CD14-positive monocyte (primary cell): ENCODE measurements at regions of chr19 and their contacts with region 1.

Region 1: GRCh38 chr19:45643024-45643926 is 4.1 kb upstream of the EML2 start:
- DNase-seq: peak; percentile 82 to 86 (median 82)
- H3K4me3 ChIP-seq: peak overlapping the region in 1 of 3 experiments; percentile 28
- H3K4me3 Mint-ChIP-seq: peak overlapping the region; percentile 69 to 83
- H3K27ac ChIP-seq: peak overlapping the region; percentile 52 to 96
- H3K27ac Mint-ChIP-seq: peak overlapping the region; percentile 57 to 96 (median 92)
- H3K4me1 ChIP-seq: peaks cover 59 to 67% of the 10 kb centered on the region in 2 donors
- H3K4me1 Mint-ChIP-seq: peaks cover 46% of the 10 kb centered on the region
- H3K27me3 ChIP-seq: peaks cover 16 to 33% of the 10 kb centered on the region in 2 donors
- H3K27me3 Mint-ChIP-seq: peaks cover 39 to 46% (median 40%) of the 10 kb centered on the region in 3 donors
- CTCF ChIP-seq: peak; percentile 97

Region 2: GRCh38 chr19:45405435-45406225 is 237.6 kb before region 1 on chr19:
- intact Hi-C with region 1: loop called in 1 of 2 experiments (anchors 10 kb)
- DNase-seq: peak; percentile 59 to 72 (median 63)
- H3K4me3 ChIP-seq: peak overlapping the region; percentile 62 to 91 (median 73)
- H3K4me3 Mint-ChIP-seq: peak overlapping the region; percentile 81 to 95
- H3K27ac ChIP-seq: peak overlapping the region; percentile 71 to 93
- H3K27ac Mint-ChIP-seq: peak overlapping the region; percentile 88 to 100 (median 98)
- H3K4me1 ChIP-seq: peaks cover 57 to 69% of the 10 kb centered on the region in 2 donors
- H3K4me1 Mint-ChIP-seq: peaks cover 50% of the 10 kb centered on the region
- H3K27me3 ChIP-seq: peaks cover 28 to 39% of the 10 kb centered on the region in 2 donors
- H3K27me3 Mint-ChIP-seq: peaks cover 37 to 42% (median 41%) of the 10 kb centered on the region in 3 donors
- CTCF ChIP-seq: no peak

Region 3: DNA sequence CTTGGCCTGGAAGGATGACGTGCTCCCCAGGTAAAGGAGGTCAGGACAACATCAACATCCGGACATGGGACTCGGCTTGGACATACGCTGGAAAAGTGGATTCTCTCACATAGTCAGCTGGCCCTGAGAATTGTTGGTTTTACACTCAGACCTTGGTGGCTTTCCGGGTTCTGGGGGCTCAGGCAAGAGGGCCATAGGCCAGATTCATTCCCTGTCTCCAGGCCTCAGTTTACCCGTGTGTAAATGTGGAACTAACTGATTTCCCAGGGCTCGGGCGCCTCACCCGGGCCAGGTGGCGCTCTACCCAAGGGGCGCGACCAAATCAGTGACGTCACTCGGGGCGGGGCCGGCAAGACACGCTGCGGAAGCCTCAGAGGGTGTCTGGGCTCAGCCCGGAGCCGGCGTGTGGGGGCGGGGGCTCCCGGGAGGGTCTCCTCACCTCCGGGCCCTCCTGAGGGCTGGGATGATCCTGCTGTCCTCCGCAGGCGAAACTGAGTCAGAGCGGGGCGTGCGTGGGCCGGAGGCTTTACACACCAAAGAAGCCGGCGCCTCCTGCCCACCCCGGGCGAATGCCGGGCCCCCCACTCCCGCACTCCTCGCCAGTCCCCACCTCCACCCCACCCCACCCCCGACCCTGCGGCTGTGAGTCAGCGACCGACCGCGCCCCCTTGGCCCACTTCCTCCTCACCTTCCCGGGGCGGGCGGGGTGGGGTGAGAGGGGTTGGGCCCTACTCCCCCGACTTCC is 136.9 kb before region 1 on chr19:
- intact Hi-C with region 1: no loop called
- DNase-seq: peak; percentile 89 to 95 (median 89)
- H3K4me3 ChIP-seq: peak overlapping the region; percentile 80 to 100 (median 91)
- H3K4me3 Mint-ChIP-seq: peak overlapping the region; percentile 88 to 89
- H3K27ac ChIP-seq: peak overlapping the region; percentile 96 to 99
- H3K27ac Mint-ChIP-seq: peak overlapping the region; percentile 96 to 99 (median 97)
- H3K4me1 ChIP-seq: peaks cover 59 to 76% of the 10 kb centered on the region in 2 donors
- H3K4me1 Mint-ChIP-seq: peaks cover 61% of the 10 kb centered on the region
- H3K27me3 ChIP-seq: no peaks in the 10 kb centered on the region
- H3K27me3 Mint-ChIP-seq: peaks cover 0 to 4% (median 0%) of the 10 kb centered on the region in 3 donors
- CTCF ChIP-seq: peak; percentile 34

Region 4: DNA sequence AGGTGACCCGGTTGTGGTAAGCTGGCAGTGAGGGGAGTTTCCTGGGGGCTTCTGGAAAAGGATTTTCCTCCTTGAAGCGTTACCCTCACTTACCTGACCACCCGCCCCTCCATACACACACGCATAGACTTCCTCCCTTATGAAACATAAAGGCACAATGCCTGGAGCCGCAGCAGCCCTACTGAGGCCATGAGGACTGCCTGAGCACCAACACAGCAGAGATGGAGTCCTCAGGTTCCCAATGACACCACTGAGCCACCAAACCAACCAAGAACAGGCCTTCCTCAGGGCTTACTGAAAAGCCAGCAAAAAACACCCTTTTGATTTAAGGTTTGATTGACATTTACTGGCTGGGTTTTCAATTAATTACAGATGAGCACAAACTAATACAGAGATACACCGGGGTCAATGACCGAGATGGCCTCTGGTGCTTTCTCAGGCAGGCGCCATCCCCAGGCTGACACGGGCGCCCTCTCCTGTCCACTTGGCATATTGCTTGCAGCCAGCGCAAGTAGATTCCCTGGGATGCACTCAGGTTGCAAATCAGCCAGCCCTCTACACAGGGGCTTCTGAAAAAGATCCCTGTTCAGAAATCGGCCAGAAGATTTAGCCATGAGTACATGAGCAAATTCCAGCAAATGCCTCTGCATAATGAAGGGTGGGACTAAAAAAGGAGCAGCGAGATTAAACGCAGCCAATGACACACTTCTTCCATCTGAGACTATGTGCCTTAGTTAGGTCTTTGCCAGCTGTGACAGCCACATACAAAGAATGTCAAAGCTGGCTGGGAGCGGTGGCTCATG is 73.5 kb before region 1 on chr19:
- intact Hi-C with region 1: no loop called
- DNase-seq: peak; percentile 22 to 41 (median 26)
- H3K4me3 ChIP-seq: no peak overlapping the region
- H3K4me3 Mint-ChIP-seq: no peak overlapping the region
- H3K27ac ChIP-seq: no peak overlapping the region
- H3K27ac Mint-ChIP-seq: peak overlapping the region in 1 of 7 donors; percentile 82
- H3K4me1 ChIP-seq: no peaks in the 10 kb centered on the region
- H3K4me1 Mint-ChIP-seq: no peaks in the 10 kb centered on the region
- H3K27me3 ChIP-seq: no peaks in the 10 kb centered on the region
- H3K27me3 Mint-ChIP-seq: peaks cover 0 to 1% (median 0%) of the 10 kb centered on the region in 3 donors
- CTCF ChIP-seq: peak; percentile 72

Region 5: GRCh38 chr19:45584332-45585157 is 58.7 kb before region 1 on chr19 and contains the start of gene OPA3:
- intact Hi-C with region 1: loop called in 1 of 2 experiments (anchors 10 kb)
- DNase-seq: peak; percentile 99 to 100 (median 100)
- H3K4me3 ChIP-seq: peak within 1 kb of the TSS; percentile 87 to 92 (median 89)
- H3K4me3 Mint-ChIP-seq: peak within 1 kb of the TSS; percentile 93 to 94
- H3K27ac ChIP-seq: peak within 1 kb of the TSS; percentile 95 to 98
- H3K27ac Mint-ChIP-seq: peak within 1 kb of the TSS; percentile 97 to 99 (median 98)
- H3K4me1 ChIP-seq: peaks cover 12 to 16% of the 10 kb centered on the region in 2 donors
- H3K4me1 Mint-ChIP-seq: peaks cover 8% of the 10 kb centered on the region
- H3K27me3 ChIP-seq: no peaks in the 10 kb centered on the region
- H3K27me3 Mint-ChIP-seq: peaks cover 2 to 12% (median 10%) of the 10 kb centered on the region in 3 donors
- CTCF ChIP-seq: no peak
- polyA plus RNA-seq, gene OPA3: 4.4 to 6.9 (median 5.6) TPM

Region 6: DNA sequence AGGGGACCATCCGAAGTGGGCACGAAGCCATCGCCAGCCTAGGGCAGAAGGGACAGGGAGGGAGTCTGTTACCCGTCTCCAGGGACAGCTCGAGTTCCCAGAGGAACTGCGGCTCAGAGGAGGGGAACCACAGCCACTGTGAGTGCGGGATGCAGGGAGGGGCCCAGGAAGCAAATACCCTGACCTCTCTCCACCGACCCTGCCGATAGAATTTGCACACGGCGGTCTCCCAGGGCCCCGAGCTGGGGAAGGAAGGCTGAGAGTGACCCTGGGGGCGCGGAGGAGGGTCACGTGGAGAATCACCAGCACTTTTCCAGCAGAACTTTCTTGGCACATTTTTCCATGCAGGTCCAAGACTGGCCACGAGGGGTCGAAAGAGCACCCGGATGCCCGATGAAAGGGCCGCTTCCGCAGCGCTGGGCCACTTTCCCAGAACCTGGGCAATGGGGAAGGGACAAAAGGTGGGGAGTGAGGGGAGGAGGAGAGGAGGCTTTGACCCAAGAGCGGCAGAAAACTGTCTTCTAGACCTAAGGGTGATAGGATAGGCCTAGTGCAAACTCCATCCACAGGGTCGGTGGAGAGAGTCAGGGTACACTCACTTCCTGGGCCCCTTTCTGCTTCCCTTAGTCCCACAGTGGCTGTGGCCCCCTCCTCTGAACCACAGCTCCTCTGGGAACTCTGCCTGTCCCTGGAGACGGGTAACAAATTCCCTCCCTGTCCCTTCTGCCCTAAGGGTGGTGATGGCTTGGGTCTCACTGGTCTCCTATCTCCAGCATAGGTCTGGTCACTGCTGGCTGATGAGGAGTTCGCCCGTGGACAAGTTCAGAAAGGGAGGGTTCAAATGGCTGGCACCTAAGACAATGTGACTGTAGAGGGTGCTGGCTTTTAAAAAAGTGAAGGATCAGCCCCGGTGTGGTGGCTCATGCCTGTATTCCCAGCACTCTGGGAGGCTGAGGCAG is 35.9 kb before region 1 on chr19:
- intact Hi-C with region 1: loop called (anchors 2 to 5 kb)
- DNase-seq: peak; percentile 27 to 63 (median 62)
- H3K4me3 ChIP-seq: no peak overlapping the region
- H3K4me3 Mint-ChIP-seq: peak overlapping the region in 1 of 2 donors; percentile 51
- H3K27ac ChIP-seq: no peak overlapping the region
- H3K27ac Mint-ChIP-seq: peak overlapping the region in 1 of 7 donors; percentile 79
- H3K4me1 ChIP-seq: peaks cover 7 to 8% of the 10 kb centered on the region in 2 donors
- H3K4me1 Mint-ChIP-seq: peaks cover 8% of the 10 kb centered on the region
- H3K27me3 ChIP-seq: peaks cover 7 to 21% of the 10 kb centered on the region in 2 donors
- H3K27me3 Mint-ChIP-seq: peaks cover 22 to 26% (median 23%) of the 10 kb centered on the region in 3 donors
- CTCF ChIP-seq: peak; percentile 87

Region 7: GRCh38 chr19:45692187-45693105 is 49.2 kb after region 1 on chr19 and contains the start of gene QPCTL:
- intact Hi-C with region 1: loop called in 1 of 2 experiments (anchors 2 kb)
- DNase-seq: peak; percentile 99
- H3K4me3 ChIP-seq: peak within 1 kb of the TSS; percentile 52 to 90 (median 79)
- H3K4me3 Mint-ChIP-seq: peak within 1 kb of the TSS; percentile 93 to 98
- H3K27ac ChIP-seq: peak within 1 kb of the TSS; percentile 87 to 97
- H3K27ac Mint-ChIP-seq: peak within 1 kb of the TSS; percentile 97 to 100 (median 100)
- H3K4me1 ChIP-seq: peaks cover 18 to 23% of the 10 kb centered on the region in 2 donors
- H3K4me1 Mint-ChIP-seq: peaks cover 23% of the 10 kb centered on the region
- H3K27me3 ChIP-seq: no peaks in the 10 kb centered on the region
- H3K27me3 Mint-ChIP-seq: peaks cover 0 to 6% (median 0%) of the 10 kb centered on the region in 3 donors
- CTCF ChIP-seq: no peak
- polyA plus RNA-seq, gene QPCTL: 0.46 to 3.0 (median 0.90) TPM